SK-N-SH (cell line): ENCODE measurements at regions of chr6 and their contacts with region 1.

Region 1: DNA sequence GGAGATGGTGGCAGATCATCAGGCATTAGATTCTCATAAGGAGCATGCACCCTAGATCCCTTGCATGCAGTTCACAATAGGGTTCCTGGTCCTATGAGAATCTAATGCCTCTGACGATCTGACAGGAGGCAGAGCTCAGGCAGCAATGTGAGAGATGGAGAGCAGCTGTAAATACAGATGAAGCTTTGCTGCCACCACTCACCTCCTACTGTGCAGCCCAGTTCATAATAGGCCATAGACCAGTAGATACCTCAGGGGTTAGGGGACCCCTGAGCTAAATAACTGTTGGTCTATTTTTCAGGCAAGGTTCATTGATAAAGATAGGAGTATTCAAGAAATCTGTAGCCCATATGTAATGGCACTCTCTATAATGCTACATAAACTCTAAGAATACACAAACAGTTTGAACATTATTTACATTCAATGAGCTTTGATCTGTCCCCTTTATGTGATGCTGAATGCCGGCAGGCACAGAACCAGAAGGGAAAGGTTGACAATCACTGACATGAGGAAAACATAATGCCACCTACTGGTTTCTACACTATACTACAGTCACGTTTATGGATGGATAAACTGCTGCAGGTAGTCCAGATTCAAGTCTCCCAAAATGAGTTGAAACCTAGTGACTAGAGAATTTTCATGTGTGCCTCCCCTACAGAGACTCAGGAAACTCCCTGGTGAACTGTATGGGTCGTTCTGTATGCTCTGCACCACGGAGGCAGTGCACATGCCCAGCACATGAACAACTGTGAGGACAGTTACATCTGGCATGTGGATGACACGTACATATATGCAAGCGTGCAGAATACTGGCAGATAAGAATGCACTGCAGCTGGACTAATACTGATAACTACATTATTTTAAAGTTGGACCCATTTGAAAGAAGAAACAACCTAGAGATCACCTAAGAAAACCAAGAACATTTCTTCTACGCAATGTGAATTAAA is 72.0 kb downstream of the DST start:
- DNase-seq: peak; percentile 33
- H3K4me3 ChIP-seq: no peak overlapping the region
- H3K27ac ChIP-seq: peak overlapping the region in 1 of 2 experiments; percentile 11; a peak in 1 of 4 replicates
- H3K4me1 ChIP-seq: peaks cover 14 to 29% of the 10 kb centered on the region in 2 experiments; a peak in 3 of 4 replicates
- H3K27me3 ChIP-seq: no peaks in the 10 kb centered on the region
- CTCF ChIP-seq: peak; percentile 63
- EP300 ChIP-seq: no peak
- RAD21 ChIP-seq: peak; percentile 59

Region 2: GRCh38 chr6:56062836-56063235 is 507.9 kb before region 1 on chr6:
- CTCF ChIA-PET with region 1: no interaction called
- POLR2A ChIA-PET with region 1: no interaction called
- DNase-seq: no peak
- H3K4me3 ChIP-seq: no peak overlapping the region
- H3K27ac ChIP-seq: no peak overlapping the region
- H3K4me1 ChIP-seq: no peaks in the 10 kb centered on the region
- H3K27me3 ChIP-seq: no peaks in the 10 kb centered on the region
- CTCF ChIP-seq: no peak
- EP300 ChIP-seq: no peak
- RAD21 ChIP-seq: no peak

Region 3: DNA sequence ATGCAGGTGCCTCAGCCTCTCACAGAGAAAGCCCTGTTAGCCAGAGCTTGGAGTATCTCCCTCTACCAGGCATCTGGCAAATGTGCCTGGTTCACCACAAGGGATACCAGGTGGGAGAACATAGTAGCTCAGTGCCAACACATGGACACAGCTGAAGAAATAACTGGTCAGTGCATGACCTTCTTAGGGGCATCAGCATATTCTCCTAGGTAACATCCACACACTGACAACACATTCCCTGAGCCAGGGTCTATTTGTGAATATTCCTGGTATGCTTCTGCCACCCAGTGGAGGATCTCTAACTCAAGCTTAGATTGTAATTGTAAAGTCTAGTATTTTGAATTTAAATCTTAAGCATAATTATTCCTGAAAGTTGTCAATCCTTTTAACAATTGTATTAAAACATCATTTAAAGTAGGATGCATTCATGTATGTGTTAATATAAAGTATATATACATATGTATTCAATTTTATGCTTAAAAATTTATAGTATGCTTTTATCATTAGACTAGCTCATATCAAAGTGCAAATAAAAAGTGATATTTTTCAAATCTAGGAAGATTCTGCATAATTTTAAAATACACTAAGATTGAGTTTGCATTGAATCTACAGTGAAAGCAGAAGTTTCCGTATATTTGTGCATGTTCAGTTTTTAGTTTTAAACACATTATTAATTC is 278.0 kb before region 1 on chr6:
- CTCF ChIA-PET with region 1: no interaction called
- POLR2A ChIA-PET with region 1: no interaction called
- DNase-seq: peak; percentile 49
- H3K4me3 ChIP-seq: no peak overlapping the region
- H3K27ac ChIP-seq: no peak overlapping the region
- H3K4me1 ChIP-seq: no peaks in the 10 kb centered on the region; a peak in 1 of 4 replicates
- H3K27me3 ChIP-seq: peaks cover 9% of the 10 kb centered on the region
- CTCF ChIP-seq: peak; percentile 77
- EP300 ChIP-seq: no peak
- RAD21 ChIP-seq: peak; percentile 92

Region 4: GRCh38 chr6:56364827-56365313 is 205.8 kb before region 1 on chr6:
- CTCF ChIA-PET with region 1: interaction called, 36 read pairs
- POLR2A ChIA-PET with region 1: interaction called, 3 read pairs
- DNase-seq: no peak
- H3K4me3 ChIP-seq: no peak overlapping the region; a peak in 1 of 4 replicates
- H3K27ac ChIP-seq: peak overlapping the region; percentile 96
- H3K4me1 ChIP-seq: peaks cover 31 to 34% of the 10 kb centered on the region in 2 experiments
- H3K27me3 ChIP-seq: no peaks in the 10 kb centered on the region
- CTCF ChIP-seq: no peak
- EP300 ChIP-seq: peak; percentile 60 to 95; a peak in 3 of 4 replicates
- RAD21 ChIP-seq: no peak

Region 5: GRCh38 chr6:56370561-56371211 is 200.0 kb before region 1 on chr6:
- CTCF ChIA-PET with region 1: interaction called, 36 read pairs
- POLR2A ChIA-PET with region 1: interaction called, 3 read pairs
- DNase-seq: peak; percentile 51
- H3K4me3 ChIP-seq: peak overlapping the region in 1 of 2 experiments; percentile 36; a peak in 2 of 4 replicates
- H3K27ac ChIP-seq: peak overlapping the region; percentile 94 to 97
- H3K4me1 ChIP-seq: peaks cover 28 to 33% of the 10 kb centered on the region in 2 experiments
- H3K27me3 ChIP-seq: no peaks in the 10 kb centered on the region
- CTCF ChIP-seq: no peak
- EP300 ChIP-seq: peak; percentile 66 to 83; a peak in 3 of 4 replicates
- RAD21 ChIP-seq: no peak; the same call in 1 of the 2 replicates

Region 6: DNA sequence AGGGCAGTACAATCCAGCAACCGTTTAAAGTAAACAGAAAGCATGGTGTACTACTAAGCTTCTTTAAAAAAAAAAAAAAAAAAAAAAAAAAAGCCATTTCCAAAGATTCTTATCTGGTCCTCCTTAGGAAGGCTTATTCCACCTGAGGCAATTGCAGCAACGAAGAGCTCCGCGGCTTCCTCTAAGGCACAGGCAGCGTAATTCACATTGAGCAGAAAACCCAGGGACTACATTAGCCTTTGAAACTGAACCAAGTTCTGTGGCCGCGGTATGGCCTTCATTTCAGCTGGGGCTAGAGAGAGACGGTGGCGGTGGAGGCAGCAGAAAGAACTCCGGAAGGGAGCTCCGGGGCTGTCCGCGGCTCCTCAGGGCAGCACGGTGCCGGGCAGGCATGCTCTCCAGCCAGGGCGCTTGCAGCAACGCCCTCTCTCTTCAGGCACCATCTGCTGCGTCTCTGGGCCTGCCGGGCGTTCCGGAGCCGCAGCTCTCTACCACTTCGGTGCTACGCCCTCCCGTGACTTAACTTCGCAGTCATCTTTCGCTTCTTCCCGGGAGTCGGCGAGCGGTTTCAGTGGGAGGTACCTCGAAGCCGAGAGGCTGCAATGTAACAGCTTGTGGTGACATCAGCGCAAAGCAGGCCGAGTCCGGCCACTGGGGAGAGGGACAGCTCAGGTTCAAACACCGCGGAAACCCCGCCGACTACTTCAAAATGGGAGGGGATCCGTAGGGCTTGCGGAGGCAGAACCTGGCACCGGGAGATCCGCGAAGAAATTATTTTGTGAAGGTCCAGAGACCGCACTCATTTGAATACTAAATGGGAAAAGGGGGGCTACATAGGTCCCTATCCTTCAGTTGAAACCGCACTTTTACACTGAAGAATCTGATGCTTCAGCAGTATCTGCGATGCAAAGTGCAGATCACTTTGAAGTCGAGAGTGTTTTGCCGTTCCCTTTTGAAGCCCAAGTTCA is 28.0 kb before region 1 on chr6:
- CTCF ChIA-PET with region 1: interaction called, 22 read pairs
- POLR2A ChIA-PET with region 1: no interaction called
- DNase-seq: peak; percentile 74
- H3K4me3 ChIP-seq: peak overlapping the region; percentile 56 to 76
- H3K27ac ChIP-seq: peak overlapping the region; percentile 88 to 96
- H3K4me1 ChIP-seq: peaks cover 19 to 31% of the 10 kb centered on the region in 2 experiments; a peak in 3 of 4 replicates
- H3K27me3 ChIP-seq: no peaks in the 10 kb centered on the region
- CTCF ChIP-seq: no peak
- EP300 ChIP-seq: peak; percentile 4 to 24; a peak in 2 of 4 replicates
- RAD21 ChIP-seq: 0 out of 2 replicates have a peak, but pooled peaks have one; percentile 11

Region 7: DNA sequence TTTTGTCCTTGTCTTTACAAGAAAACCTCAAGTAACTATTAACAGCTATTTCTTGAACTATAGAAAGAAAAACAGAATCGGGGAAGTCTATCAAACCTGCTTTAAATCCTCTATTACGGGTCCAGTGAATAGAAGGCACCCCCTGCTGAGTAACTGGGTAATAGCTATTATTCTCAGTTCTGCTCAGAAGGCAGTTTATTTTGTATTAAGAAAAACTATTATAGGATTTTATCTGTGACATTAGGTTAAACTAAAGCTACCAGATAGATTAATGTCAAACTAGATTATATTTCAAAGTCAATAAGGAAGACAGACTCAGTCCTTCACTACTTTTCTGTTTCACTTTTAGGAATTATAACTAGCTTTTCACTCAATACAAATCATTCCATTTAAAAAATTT is 21.7 kb before region 1 on chr6:
- CTCF ChIA-PET with region 1: interaction called, 22 read pairs
- POLR2A ChIA-PET with region 1: no interaction called
- DNase-seq: peak; percentile 27
- H3K4me3 ChIP-seq: no peak overlapping the region
- H3K27ac ChIP-seq: peak overlapping the region; percentile 33 to 55; a peak in 3 of 4 replicates
- H3K4me1 ChIP-seq: peaks cover 22 to 26% of the 10 kb centered on the region in 2 experiments; a peak in 3 of 4 replicates
- H3K27me3 ChIP-seq: no peaks in the 10 kb centered on the region
- CTCF ChIP-seq: peak; percentile 67
- EP300 ChIP-seq: peak in 1 of 2 experiments; percentile 30; a peak in 1 of 4 replicates
- RAD21 ChIP-seq: peak; percentile 77

Region 8: GRCh38 chr6:56555438-56555872 is 15.2 kb before region 1 on chr6:
- CTCF ChIA-PET with region 1: interaction called, 22 read pairs
- POLR2A ChIA-PET with region 1: no interaction called
- DNase-seq: no peak
- H3K4me3 ChIP-seq: no peak overlapping the region
- H3K27ac ChIP-seq: peak overlapping the region; percentile 21 to 77; a peak in 3 of 4 replicates
- H3K4me1 ChIP-seq: peaks cover 11 to 13% of the 10 kb centered on the region in 2 experiments; a peak in 2 of 4 replicates
- H3K27me3 ChIP-seq: no peaks in the 10 kb centered on the region
- CTCF ChIP-seq: no peak
- EP300 ChIP-seq: no peak
- RAD21 ChIP-seq: no peak; the same call in 1 of the 2 replicates